AG04449 (cell line): ENCODE measurements at regions of chr10 and their contacts with region 1.

Region 1: GRCh38 chr10:104274762-104275721 is 6.1 kb downstream of the GSTO2 start:
- DNase-seq: no peak
- H3K4me3 ChIP-seq: peak overlapping the region; percentile 41
- CTCF ChIP-seq: peak; percentile 92

Region 2: GRCh38 chr10:104254493-104255310 is 20.3 kb before region 1 on chr10 and contains the start of gene GSTO1:
- CTCF ChIA-PET with region 1: interaction called, 29 read pairs
- POLR2A ChIA-PET with region 1: interaction called, 14 read pairs
- DNase-seq: no peak
- H3K4me3 ChIP-seq: peak within 1 kb of the TSS; percentile 81
- CTCF ChIP-seq: peak; percentile 3

Region 3: DNA sequence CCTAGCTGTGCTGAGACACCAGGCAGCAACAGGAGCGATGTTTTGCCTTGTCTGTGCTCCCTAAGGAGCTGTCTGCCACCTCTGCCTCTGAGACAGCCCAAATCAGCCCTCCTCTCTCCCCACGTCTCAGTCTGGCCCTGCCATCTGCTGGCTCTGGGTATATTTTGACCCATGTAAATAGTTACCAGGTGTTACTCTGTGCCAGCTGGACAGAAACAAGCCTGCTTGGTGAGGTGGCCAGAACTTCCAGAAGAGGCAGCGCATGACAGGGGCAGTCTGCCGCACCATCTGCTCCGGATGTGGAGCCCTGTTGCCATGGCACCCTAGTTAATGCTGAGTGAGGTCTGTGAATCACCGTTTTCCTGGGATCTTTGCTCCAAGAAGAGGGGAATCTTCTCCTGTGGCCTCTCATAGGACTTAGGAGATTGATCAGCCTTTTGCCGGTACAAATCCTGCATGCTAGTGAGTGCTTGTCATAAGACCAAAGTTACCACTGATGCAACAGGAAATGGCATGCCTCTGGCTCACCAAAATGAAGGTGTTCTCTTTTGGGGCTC is 25.8 kb after region 1 on chr10:
- CTCF ChIA-PET with region 1: interaction called, 557 read pairs
- POLR2A ChIA-PET with region 1: interaction called, 4 read pairs
- DNase-seq: peak; percentile 93
- H3K4me3 ChIP-seq: peak overlapping the region; percentile 43
- CTCF ChIP-seq: no peak

Region 4: DNA sequence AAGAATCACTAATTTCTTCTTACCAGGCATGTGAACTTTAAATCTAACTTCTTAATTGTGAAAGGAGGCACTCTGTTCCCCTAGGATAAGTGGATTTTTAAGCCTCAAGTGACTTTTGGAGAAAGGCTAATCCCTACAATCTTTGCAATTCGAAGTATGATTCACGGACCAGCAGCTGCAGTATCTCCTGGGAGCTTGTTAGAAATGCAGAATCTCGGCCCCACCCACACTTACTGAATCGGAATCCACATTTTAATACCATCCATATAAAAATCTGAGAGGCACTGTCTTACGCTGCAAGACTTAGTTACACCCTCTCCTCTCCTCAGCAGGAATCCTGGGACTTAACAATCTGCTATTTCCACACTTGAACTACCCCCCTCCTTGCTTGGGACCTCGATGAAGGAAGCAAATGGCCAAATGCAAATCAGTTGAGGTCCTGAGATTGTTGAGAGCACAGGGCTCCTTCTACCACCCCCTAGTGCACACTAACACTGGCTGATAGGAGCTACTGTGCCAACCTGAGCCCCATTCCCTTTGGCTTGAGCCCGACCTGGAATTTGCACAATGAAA is 42.2 kb after region 1 on chr10:
- CTCF ChIA-PET with region 1: interaction called, 10 read pairs
- POLR2A ChIA-PET with region 1: no interaction called
- DNase-seq: no peak
- H3K4me3 ChIP-seq: no peak overlapping the region
- CTCF ChIP-seq: no peak

Region 5: DNA sequence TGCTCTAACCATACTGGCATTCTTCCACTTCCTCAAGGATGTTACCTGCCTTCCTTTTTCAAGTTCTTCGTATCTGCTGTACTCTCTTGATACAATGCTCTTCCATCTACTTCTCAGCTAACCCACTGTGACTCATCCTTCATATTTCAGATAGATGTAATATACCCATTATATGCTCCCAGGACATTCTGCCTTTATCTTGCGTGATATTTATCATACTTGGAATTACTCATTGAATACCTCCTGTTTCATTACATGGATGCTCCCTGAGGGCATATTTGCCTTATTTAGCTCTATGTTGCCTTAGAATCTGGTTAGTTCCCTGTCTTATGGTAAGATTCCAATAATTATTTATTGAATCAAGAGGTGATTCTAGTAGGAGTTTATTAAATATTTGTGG is 1072.4 kb after region 1 on chr10:
- CTCF ChIA-PET with region 1: no interaction called
- POLR2A ChIA-PET with region 1: no interaction called
- DNase-seq: no peak
- H3K4me3 ChIP-seq: no peak overlapping the region
- CTCF ChIP-seq: no peak